ENCODE measurements at regions of chr11 and their contacts with region 1.

Region 1: DNA sequence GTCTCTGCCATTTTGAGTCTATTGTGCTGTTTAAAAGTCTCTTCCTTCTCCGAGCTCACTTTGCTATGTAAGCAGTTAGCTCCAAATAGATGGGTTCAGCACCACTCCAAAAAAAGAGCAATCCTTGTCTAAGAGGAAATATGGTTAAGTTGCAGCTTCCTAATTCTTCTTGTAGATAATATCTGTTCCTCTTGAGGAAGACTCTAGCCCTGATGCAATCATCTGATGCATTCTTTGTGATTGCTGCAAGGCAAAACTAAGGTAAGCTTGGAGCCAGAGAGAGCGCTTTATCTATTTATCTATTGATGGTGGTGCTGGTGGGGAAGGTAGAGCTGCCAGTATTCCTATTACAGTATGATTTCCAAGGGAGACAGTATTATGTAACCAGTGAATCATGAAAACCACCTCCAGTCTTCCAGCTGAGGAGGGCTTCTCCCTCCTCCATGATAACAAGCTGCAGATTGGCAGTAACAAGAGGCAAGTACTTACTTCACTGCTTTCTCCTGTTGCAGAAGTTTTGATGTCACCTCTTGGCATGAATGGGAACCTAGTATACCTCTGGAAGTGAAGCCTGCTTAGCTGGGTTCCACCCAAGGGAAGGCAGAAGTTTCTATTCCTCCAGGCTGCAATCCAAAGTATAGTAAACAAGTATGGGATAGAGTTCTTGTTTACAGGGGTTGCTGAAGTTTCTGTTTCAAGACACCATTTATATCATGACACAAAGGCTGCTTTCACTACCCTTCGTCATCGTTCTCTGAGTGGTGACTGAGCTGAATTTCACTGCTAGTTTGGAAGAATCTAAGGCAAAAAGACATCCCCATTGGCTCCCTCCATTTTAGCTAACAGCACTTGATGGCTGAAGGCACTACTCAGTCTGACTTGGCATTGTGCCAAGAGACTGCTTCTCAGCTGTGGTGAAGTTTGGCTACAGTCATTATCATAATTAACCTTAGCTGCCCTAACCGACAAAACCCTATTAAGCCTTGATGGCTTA is 49.7 kb downstream of the FDX1 start:
- DNase-seq: peak in 1 of 2 donors; percentile 47
- H3K4me3 ChIP-seq: no peak overlapping the region
- H3K27ac ChIP-seq: peak overlapping the region in 1 of 5 donors; percentile 20
- H3K4me1 ChIP-seq: peaks cover 0 to 6% (median 0%) of the 10 kb centered on the region in 4 donors
- H3K27me3 ChIP-seq: no peaks in the 10 kb centered on the region
- CTCF ChIP-seq: no peak
- EP300 ChIP-seq: no peak
- POLR2A ChIP-seq: no peak

Region 2: GRCh38 chr11:110349138-110349996 is 130.0 kb before region 1 on chr11:
- intact Hi-C with region 1: no loop called
- DNase-seq: peak in 1 of 2 donors; percentile 10
- H3K4me3 ChIP-seq: no peak overlapping the region
- H3K27ac ChIP-seq: peak overlapping the region in 3 of 5 donors; percentile 15 to 31 (median 29)
- H3K4me1 ChIP-seq: peaks cover 0 to 9% (median 2%) of the 10 kb centered on the region in 4 donors
- H3K27me3 ChIP-seq: no peaks in the 10 kb centered on the region
- CTCF ChIP-seq: no peak
- EP300 ChIP-seq: no peak
- POLR2A ChIP-seq: no peak

Region 3: DNA sequence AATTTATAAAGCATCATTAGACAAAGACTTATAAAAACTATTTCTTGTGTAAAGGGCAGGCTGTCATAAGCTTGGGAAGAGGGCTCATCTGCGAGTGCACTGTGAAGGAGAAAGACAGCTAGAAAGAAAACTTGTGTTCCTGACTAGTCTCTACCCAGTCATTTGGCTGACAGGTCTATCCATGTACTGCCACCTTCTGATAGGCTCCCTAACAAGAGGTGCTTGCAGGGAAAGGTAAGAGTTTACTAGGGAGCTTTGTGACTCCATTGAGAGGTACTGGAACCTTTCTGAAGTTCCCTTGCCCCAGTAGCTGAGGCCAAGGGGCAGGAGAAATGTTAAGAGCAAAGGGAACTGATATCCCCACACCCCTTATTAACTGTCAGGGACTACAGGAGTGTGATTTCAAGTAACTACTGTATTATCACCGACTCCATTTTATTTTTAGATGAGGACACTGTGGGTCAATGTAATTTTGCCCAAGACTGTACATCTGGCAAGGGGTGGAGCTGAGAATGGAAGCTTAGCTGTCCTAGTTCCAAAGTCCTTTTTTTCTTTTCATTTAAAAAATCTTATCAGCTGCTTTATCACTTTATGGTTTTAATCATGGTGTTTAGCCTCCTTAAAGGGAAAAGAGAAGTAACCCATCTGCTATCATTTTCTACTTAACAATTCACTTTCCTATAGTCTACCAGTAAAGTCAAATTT is 103.5 kb after region 1 on chr11:
- intact Hi-C with region 1: no loop called
- DNase-seq: no peak
- H3K4me3 ChIP-seq: no peak overlapping the region
- H3K27ac ChIP-seq: no peak overlapping the region
- H3K4me1 ChIP-seq: no peaks in the 10 kb centered on the region
- H3K27me3 ChIP-seq: no peaks in the 10 kb centered on the region
- CTCF ChIP-seq: no peak
- EP300 ChIP-seq: no peak
- POLR2A ChIP-seq: no peak

Region 4: GRCh38 chr11:110948112-110948511 is 468.7 kb after region 1 on chr11:
- intact Hi-C with region 1: no loop called
- DNase-seq: no peak
- H3K4me3 ChIP-seq: no peak overlapping the region
- H3K27ac ChIP-seq: peak overlapping the region in 1 of 5 donors; percentile 19
- H3K4me1 ChIP-seq: peaks cover 0 to 28% (median 19%) of the 10 kb centered on the region in 4 donors
- H3K27me3 ChIP-seq: no peaks in the 10 kb centered on the region
- CTCF ChIP-seq: no peak
- EP300 ChIP-seq: no peak
- POLR2A ChIP-seq: no peak

Region 5: DNA sequence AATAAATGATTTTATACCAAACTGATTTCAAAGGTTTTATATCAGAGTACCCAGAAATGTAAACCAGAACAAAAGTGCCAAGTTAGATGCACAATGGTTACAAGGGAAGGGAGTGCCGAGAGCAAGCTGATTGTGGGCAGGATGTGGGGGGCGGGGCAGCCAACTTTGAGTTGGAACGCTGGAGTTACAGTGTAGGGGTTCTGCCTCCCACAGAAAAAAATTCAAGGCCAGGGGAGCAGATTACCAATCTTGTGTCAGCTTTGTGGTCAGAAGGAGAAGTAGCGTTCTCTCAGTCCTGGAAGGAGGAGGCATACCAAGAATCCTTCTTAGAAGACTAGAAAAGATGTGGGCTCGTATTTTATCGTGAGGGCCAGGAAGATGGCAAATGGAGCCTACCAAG is 750.2 kb after region 1 on chr11:
- intact Hi-C with region 1: loop called (anchors 10 kb)
- DNase-seq: peak in 1 of 2 donors; percentile 17
- H3K4me3 ChIP-seq: no peak overlapping the region
- H3K27ac ChIP-seq: no peak overlapping the region
- H3K4me1 ChIP-seq: peaks cover 4 to 16% (median 11%) of the 10 kb centered on the region in 4 donors
- H3K27me3 ChIP-seq: no peaks in the 10 kb centered on the region
- CTCF ChIP-seq: no peak
- EP300 ChIP-seq: no peak
- POLR2A ChIP-seq: no peak

Measured in stomach (tissue), 19 donors.